Gastrocnemius medialis (tissue), 4 donors: ENCODE measurements at regions of chr13 and their contacts with region 1.

Region 1: DNA sequence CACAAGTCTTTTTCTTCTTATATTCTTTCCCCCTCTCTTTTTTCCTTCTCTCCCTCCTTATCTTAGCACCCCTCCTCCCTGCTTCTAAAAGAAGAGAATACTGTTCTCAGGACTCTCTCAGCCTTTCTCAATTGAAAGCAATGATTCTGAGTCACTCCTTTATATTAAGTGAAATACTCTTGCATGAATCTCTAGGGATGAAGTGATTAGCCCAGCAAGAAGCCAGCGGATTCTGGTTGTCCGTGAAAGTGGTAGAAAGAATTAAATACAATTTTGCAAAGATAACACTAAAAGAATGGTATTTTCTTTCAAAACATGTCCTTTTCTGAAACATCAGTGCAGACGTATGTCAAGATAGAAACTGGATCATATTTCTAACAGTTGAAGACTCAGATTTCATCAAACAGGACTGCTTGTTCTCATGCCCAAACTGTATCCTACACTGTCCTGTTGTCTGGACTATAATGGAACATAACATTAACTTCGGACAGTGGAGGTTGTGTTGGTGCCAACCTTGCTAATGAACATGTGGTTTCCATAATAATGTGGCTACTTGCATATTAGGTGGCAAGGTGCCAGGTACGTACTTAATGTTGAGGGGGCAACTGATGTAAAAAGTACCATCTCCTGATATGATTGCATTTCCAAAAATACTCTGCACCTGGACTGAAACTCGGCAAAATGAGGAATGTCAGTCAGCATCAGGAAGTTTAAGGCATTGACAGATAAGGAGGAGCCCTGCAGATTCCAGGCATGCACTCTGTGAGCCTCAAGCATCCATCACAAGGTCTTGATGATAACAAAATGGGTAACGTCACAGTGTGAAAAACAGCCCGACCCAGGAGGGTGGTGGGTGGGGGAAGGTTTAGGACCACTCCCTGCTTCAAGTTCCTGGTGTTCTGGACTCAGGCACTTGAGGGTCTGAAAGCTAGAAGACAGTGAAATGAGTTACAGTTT is 357.2 kb downstream of the DLEU7 start:
- DNase-seq: peak in 1 of 2 donors; percentile 11
- ATAC-seq: peak; percentile 93 to 95
- H3K4me3 ChIP-seq: no peak overlapping the region
- H3K27ac ChIP-seq: peak overlapping the region in 3 of 4 donors; percentile 30 to 73 (median 58)
- H3K4me1 ChIP-seq: peaks cover 8 to 19% of the 10 kb centered on the region in 2 donors
- H3K27me3 ChIP-seq: no peaks in the 10 kb centered on the region
- CTCF ChIP-seq: no peak
- POLR2A ChIP-seq: no peak

Region 2: DNA sequence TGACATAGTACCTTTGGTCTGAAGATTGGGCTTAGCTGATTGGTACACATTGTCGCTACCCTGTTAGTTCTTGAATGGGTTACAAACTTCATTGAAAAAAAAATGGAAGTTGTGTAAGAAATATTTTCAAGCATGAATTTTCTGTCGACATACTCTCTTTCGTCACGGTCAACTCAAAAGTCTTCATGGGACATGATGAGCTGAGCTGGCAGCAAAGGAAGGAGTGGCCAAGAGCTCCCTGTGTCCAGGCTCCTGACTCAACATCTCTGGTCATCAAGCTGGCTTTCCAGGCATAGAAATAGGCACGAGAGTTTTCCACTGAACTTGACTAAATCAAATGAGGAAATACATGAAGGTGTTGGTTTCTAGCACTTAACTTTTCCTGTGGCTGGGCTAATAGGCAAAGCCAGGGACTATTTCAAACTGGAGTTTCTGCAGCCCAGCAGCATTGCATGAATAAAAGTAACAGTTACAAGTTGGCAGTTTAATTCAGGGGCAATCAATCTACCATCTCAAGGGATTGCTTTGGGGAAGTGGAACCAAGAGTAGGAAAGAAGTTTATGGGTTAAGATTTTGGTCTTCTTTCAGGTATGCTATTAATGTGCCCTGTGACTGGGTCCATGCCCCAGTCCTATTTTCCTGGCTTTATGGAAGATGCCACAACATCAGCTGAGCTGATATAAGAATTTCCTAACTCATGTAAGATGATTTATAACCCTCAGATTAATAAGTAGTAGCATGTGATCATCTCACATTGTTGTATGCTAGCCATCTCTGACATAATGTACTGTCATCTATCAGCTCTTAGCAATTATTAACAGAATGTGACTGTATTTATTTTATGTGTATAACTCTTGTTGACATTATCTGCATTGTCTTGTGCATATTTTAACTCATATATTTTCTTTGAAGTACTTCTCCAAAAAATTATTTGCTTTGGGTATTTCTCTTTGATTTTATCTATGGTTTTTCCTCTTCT is 28.6 kb before region 1 on chr13:
- in situ Hi-C with region 1: no loop called
- intact Hi-C with region 1: loop called (anchors 1 kb)
- DNase-seq: peak in 1 of 2 donors; percentile 23
- ATAC-seq: peak in 1 of 2 donors; percentile 39
- H3K4me3 ChIP-seq: no peak overlapping the region
- H3K27ac ChIP-seq: no peak overlapping the region
- H3K4me1 ChIP-seq: peaks cover 4% of the 10 kb centered on the region in 2 donors
- H3K27me3 ChIP-seq: no peaks in the 10 kb centered on the region
- CTCF ChIP-seq: no peak
- POLR2A ChIP-seq: no peak